ENCODE measurements at regions of chr13 and their contacts with region 1.

Region 1: DNA sequence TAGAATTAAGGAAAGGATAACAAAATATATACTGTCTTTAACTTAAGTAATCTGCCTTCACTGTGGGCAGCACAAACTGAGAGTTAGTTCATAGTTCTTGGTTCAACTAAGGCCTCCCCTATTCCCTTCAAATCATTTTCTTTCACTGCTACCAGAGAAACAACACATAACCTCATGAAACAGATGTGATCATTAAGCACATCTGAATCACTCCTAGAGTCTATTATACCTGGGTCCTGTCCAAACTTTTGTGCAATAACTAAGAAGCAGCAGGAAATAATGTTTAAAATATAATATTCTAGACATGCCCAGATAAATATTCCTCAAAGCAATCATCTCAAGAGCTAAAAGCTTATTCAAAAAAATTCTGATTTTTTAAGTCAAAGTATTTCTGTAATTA is 62.9 kb downstream of the ZC3H13 start:
- DNase-seq: peak; percentile 86
- ATAC-seq: peak; percentile 94
- H3K4me3 ChIP-seq: no peak overlapping the region
- H3K27ac ChIP-seq: peak overlapping the region; percentile 29; the same call in 1 of the 2 replicates
- H3K4me1 ChIP-seq: peaks cover 2% of the 10 kb centered on the region; the same call in 1 of the 2 replicates
- H3K27me3 ChIP-seq: no peaks in the 10 kb centered on the region
- CTCF ChIP-seq: no peak
- POLR2A ChIP-seq: no peak
- RAD21 ChIP-seq: no peak

Region 2: GRCh38 chr13:46041419-46041839 is 51.8 kb after region 1 on chr13:
- CTCF ChIA-PET with region 1: no interaction called
- POLR2A ChIA-PET with region 1: no interaction called
- dilution Hi-C with region 1: no loop called
- in situ Hi-C with region 1: no loop called
- intact Hi-C with region 1: loop called (anchors 5 kb)
- DNase-seq: peak; percentile 66
- ATAC-seq: peak; percentile 22
- H3K4me3 ChIP-seq: no peak overlapping the region
- H3K27ac ChIP-seq: no peak overlapping the region
- H3K4me1 ChIP-seq: peaks cover 4% of the 10 kb centered on the region
- H3K27me3 ChIP-seq: no peaks in the 10 kb centered on the region
- CTCF ChIP-seq: no peak
- POLR2A ChIP-seq: no peak
- RAD21 ChIP-seq: no peak

Measured in IMR-90 (cell line).